Vagina (tissue), 2 donors: ENCODE measurements at regions of chr2 and their contacts with region 1.

Region 1: DNA sequence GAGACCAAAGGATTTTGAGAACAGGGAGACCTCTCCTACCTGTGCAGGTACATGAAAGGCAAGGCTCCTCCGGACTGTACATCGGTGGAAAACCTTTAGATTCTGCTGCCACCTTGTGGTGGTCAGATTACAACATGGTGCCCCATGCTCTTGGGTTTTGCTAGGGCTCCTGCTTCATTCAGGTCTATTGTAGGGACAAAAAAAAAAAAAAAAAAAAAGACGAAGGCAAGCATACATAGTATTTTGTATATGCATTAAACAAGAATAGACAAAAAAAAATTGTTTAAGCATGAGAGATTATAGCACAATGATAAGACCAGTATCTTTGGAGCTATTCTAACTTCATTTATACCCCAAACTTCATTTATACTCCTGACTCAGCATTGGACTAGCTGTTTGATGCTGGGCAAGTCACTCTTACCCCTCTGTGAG is 27.4 kb upstream of the SPR start:
- DNase-seq: no peak
- H3K4me3 ChIP-seq: no peak overlapping the region
- H3K27ac ChIP-seq: no peak overlapping the region
- H3K4me1 ChIP-seq: no peaks in the 10 kb centered on the region
- H3K27me3 ChIP-seq: no peaks in the 10 kb centered on the region
- CTCF ChIP-seq: peak in 2 of 3 experiments; percentile 38 to 58
- POLR2A ChIP-seq: no peak

Region 2: DNA sequence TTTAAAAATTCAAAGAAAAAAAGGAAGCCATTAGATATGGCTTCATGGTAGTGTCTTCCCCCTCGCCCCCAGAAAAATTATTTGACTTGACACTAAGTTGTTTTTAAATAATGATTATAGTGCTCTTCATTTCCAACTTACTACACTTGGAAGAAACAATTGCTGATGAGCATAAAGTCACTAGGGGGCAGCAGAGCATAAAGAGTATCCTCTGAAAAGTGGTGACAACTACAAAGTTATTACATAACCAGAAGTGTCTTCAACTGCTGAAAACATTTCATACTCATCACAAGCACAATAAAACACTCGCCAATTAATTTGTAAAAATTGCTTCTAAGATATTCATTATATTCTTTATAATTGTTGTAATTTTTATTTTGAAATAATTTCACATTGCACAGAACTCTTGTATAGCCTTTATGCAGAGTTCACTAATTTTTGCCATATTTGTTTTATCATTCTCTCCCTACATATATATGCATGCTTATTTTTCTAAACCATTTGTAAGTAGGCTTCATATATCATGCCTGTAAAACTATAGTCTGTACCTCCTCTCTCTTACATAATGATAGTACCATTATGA is 88.9 kb before region 1 on chr2:
- intact Hi-C with region 1: loop called (anchors 5 kb)
- DNase-seq: no peak
- H3K4me3 ChIP-seq: no peak overlapping the region
- H3K27ac ChIP-seq: no peak overlapping the region
- H3K4me1 ChIP-seq: no peaks in the 10 kb centered on the region
- H3K27me3 ChIP-seq: no peaks in the 10 kb centered on the region
- CTCF ChIP-seq: peak; percentile 84 to 89 (median 87)
- POLR2A ChIP-seq: no peak